AG04450 (cell line): ENCODE measurements at regions of chr2 and their contacts with region 1.

Region 1: DNA sequence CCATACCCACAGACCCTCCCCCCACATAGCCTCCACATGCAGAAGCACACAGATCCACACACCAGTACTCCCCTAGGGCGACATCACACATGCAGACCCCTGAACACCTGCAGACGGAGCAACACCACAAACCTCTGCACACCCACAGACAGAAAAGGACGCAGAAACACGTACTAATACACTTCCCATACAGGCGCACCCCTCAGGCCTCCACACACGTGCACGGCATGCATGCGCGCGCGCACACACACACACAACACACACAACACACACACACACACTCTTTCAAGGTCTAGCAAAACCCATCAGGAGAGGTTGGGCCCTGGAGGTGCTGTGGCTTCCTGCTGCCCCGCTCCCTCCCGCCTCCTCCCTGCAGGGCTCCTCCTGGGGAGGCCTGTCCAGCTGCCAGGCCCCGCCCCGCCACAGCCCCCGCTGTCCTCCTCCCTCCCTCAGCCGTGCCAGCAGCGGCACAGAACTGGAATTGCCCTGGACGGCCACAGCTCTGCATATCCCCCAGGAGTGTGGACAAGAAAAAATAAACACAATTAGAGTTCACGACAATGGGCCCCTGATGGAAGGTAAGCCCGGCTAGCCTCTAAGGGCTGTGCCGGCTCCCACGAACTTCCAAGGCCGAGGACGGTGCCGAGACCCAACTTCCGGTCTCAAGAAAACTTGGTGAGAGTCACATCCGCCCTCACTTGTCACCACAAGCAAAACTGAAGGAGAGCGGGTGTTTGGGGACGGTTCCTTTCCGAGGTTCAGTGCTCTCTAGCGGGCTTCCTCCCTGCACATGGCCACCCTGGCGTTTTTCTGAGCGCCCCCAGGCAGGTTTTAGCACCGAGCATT is 6.8 kb downstream of the ZFP36L2 start:
- DNase-seq: no peak
- H3K4me3 ChIP-seq: peak overlapping the region; percentile 87
- H3K27ac ChIP-seq: peak overlapping the region; percentile 96
- H3K27me3 ChIP-seq: no peaks in the 10 kb centered on the region
- CTCF ChIP-seq: no peak

Region 2: GRCh38 chr2:42844901-42845821 is 374.4 kb before region 1 on chr2:
- CTCF ChIA-PET with region 1: no interaction called
- POLR2A ChIA-PET with region 1: interaction called, 21 read pairs
- DNase-seq: peak; percentile 82
- H3K4me3 ChIP-seq: no peak overlapping the region
- H3K27ac ChIP-seq: peak overlapping the region; percentile 52
- H3K27me3 ChIP-seq: peaks cover 2% of the 10 kb centered on the region
- CTCF ChIP-seq: no peak

Region 3: DNA sequence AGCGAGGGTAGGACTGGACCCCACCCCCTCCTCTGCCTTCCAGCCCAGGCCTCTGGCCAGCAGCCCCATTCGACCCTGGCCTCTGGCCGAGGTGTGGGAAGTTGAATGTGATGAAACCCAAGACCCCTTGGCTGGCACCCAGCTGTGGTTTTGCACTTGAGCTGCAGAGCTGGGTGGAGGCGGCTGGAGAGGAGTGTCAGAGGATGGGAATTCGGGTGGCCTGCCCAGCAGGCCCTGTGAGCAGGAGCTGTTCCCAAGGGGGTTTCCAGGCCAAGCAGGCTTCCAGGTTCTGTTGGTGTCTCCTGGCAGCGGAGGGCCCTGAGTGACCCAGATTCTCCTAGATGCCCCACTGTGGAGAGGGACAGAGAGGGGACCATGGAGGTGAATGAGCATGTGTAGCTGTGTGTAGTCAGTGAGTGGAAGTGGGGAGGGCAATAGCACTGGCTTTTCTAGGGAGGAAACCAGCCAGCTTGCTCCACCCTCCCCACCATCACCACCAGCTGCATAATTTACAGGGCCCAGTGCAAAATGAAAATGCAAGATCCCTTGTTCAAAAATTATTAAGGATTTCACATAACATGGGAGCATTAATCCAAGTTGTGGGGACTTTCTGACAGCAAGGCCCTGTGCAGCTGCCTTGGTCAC is 255.0 kb before region 1 on chr2:
- CTCF ChIA-PET with region 1: no interaction called
- POLR2A ChIA-PET with region 1: interaction called, 21 read pairs
- DNase-seq: peak; percentile 90
- H3K4me3 ChIP-seq: no peak overlapping the region
- H3K27ac ChIP-seq: peak overlapping the region; percentile 90
- H3K27me3 ChIP-seq: no peaks in the 10 kb centered on the region
- CTCF ChIP-seq: no peak

Region 4: DNA sequence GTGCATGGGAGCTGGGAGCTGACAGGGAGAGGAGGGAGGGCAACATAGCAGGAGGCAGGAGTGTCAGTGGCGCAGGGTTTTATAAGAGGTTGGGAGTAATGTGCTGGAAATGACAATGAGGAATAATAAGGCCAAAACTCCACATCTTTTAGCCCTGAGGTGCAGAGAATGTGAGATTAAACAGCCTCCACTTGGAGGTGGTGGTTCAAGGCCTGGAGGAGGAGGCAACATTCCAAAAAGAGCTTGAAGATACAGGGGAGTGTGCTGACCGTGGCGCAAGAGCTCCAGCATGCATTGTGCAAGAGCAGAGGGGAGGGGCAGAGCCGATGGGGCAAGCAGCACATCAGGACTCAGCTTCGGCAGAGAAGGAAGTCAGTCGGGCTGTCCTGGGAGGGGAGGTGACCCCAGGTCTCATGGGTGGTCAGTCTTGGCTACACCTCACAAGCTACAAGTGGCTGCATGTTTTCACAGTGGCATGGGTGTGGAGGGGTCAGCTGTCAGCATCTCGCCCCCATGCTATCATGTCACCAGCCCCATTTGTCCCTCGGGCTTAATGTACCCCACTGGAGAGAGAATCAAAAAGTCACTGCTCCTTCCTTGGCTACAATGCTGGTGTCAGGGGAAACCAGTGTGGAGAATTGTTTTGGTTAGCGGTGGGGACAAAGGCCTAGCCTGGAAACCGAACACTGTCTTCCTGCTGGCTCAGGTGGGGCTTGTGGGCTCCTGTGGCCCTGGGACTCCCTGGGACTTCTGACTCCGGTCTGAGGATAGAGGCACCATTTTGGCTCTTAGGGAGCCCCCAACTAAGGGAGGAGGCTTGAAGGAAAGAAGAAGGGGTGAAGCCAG is 201.2 kb before region 1 on chr2:
- CTCF ChIA-PET with region 1: interaction called, 12 read pairs
- POLR2A ChIA-PET with region 1: interaction called, 4 read pairs
- DNase-seq: peak; percentile 60
- H3K4me3 ChIP-seq: no peak overlapping the region
- H3K27ac ChIP-seq: peak overlapping the region; percentile 21
- H3K27me3 ChIP-seq: no peaks in the 10 kb centered on the region
- CTCF ChIP-seq: no peak

Region 5: GRCh38 chr2:43041661-43042360 is 177.8 kb before region 1 on chr2:
- CTCF ChIA-PET with region 1: no interaction called
- POLR2A ChIA-PET with region 1: interaction called, 13 read pairs
- DNase-seq: peak; percentile 93
- H3K4me3 ChIP-seq: no peak overlapping the region
- H3K27ac ChIP-seq: peak overlapping the region; percentile 70
- H3K27me3 ChIP-seq: no peaks in the 10 kb centered on the region
- CTCF ChIP-seq: no peak